ENCODE measurements at regions of chr3 and their contacts with region 1.

Region 1: DNA sequence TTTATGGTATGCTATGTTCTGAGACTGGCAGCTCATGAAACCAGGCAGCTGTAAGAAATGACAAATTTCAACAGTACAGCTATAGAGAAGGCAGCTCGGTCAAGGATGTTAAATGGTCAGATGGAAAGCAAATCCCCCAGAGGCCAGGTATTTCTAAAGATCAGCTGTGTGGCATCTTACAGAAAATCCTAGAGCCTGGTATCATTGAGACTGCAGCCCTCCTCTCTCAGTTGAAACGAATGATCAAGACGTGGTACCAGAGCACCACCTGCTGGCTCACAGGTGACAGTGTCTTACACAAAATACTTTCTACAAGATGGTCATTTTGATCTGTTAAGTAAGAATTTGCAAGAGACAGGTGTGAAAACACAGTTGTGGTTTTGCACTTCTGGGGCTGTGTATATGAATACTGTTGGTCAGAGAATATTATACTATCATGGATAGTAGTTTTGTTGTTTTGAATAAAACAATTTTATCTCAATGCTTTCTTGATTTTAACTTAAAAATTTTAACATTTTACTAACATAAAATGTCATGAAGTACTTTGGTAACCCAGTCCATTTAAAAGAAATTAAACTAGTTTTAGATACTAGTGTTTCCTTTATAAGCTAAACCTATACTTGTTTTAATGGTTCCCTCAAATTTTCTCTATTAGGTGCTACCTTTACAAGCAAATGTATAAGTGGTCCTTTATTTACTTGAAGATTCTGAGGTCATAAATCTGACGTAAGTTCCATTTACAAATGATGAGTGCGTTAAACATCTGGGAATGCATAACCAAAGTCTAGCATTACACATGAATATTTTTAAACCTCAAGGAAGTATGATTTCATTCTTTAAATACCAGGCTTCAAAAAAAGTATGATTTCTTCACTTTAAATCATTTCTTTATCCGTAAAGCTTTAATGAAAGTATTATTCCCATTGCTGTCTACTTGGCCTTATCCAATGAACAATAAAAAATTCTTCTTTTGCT is 121.8 kb downstream of the PDZRN3 start:
- DNase-seq: peak; percentile 65
- ATAC-seq: peak; percentile 74
- H3K4me3 ChIP-seq: no peak overlapping the region
- H3K27ac ChIP-seq: no peak overlapping the region
- H3K4me1 ChIP-seq: no peaks in the 10 kb centered on the region
- H3K27me3 ChIP-seq: peaks cover 13% of the 10 kb centered on the region
- CTCF ChIP-seq: peak; percentile 91

Region 2: DNA sequence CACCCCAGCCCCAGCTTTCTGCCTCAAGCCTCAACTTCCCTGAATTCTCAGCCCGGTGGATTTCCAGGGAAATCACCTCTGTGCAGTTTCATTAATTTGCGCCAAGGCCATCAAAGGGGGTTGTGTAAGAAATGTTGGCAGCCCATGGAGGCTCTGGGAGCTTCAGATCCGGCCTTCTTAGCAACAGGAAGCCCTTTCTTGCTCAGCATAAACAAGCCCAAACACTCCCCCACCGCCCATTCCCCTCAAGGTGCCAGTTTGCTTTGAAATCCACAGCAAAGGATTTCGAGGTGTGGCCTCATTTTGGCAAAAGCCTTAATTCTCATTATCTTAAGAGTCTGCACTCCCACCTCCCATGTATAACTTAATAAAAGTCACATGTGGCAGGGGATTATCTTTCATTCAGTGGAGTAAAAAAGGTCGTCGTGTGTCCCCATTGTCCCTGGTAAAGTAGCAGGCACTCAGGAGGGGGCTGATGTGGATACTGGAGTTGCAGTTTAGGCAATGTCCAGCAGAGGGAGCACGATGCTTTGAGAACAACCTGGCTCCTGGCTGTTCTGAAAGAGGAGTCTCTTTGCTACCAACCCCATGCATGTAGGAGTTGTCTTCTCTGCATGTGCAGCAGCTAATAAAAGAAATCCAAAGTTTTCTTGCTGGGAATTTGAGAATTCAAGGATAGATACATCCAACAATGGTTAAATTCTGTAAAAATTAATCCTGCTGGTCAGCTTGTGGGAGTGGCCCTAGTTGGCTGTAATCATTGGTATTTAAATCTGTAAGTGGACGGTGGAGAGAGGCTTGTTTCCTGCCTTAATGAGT is 401.9 kb before region 1 on chr3:
- CTCF ChIA-PET with region 1: no interaction called
- POLR2A ChIA-PET with region 1: no interaction called
- intact Hi-C with region 1: loop called (anchors 1 kb)
- DNase-seq: peak; percentile 92
- ATAC-seq: peak; percentile 95
- H3K4me3 ChIP-seq: no peak overlapping the region
- H3K27ac ChIP-seq: no peak overlapping the region
- H3K4me1 ChIP-seq: no peaks in the 10 kb centered on the region
- H3K27me3 ChIP-seq: peaks cover 42% of the 10 kb centered on the region
- CTCF ChIP-seq: peak; percentile 96

Region 3: DNA sequence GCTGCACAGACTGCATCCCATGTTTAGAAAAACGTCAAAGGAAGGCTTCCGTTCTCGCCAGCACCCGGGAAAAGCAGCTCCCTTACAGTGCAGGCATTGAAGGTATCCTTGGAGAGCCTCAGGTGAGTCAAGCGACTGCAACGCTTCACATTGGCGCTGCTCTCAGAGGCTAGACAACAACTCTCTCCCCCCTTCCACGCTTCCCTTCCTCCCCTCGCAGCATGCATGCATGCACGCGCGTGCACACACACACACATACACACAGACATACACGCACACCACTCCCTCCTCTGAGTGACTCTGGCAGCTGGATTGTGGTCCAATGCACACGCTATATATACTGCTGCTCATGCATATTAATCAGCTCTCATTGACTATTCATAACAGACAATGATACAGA is 69.2 kb before region 1 on chr3:
- CTCF ChIA-PET with region 1: no interaction called
- POLR2A ChIA-PET with region 1: no interaction called
- intact Hi-C with region 1: no loop called
- DNase-seq: no peak
- ATAC-seq: no peak
- H3K4me3 ChIP-seq: no peak overlapping the region
- H3K27ac ChIP-seq: no peak overlapping the region
- H3K4me1 ChIP-seq: no peaks in the 10 kb centered on the region
- H3K27me3 ChIP-seq: peaks cover 25% of the 10 kb centered on the region
- CTCF ChIP-seq: no peak

Region 4: DNA sequence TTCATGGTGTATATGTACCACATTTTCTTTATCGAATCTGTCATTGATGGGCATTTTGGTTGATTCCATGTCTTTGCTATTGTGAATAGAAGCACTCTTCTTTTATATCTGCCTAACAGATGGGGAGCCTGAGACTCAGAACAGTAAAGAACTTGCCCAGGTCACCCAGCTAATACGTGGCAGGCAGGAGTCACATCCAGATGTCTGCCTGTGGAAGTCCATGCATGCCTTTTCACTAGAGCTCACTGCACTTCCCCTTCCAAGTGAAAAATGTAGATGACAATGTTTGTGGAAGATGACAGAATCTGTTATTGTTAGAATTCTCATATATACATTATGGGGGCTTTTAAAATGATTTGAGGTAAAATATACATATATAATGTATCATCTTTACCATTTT is 43.2 kb before region 1 on chr3:
- CTCF ChIA-PET with region 1: no interaction called
- POLR2A ChIA-PET with region 1: no interaction called
- intact Hi-C with region 1: loop called (anchors 5 kb)
- DNase-seq: no peak
- ATAC-seq: no peak
- H3K4me3 ChIP-seq: no peak overlapping the region
- H3K27ac ChIP-seq: no peak overlapping the region
- H3K4me1 ChIP-seq: no peaks in the 10 kb centered on the region
- H3K27me3 ChIP-seq: 0 out of 2 replicates have a peak, but pooled peaks cover 5% of the 10 kb centered on the region
- CTCF ChIP-seq: no peak

Region 5: DNA sequence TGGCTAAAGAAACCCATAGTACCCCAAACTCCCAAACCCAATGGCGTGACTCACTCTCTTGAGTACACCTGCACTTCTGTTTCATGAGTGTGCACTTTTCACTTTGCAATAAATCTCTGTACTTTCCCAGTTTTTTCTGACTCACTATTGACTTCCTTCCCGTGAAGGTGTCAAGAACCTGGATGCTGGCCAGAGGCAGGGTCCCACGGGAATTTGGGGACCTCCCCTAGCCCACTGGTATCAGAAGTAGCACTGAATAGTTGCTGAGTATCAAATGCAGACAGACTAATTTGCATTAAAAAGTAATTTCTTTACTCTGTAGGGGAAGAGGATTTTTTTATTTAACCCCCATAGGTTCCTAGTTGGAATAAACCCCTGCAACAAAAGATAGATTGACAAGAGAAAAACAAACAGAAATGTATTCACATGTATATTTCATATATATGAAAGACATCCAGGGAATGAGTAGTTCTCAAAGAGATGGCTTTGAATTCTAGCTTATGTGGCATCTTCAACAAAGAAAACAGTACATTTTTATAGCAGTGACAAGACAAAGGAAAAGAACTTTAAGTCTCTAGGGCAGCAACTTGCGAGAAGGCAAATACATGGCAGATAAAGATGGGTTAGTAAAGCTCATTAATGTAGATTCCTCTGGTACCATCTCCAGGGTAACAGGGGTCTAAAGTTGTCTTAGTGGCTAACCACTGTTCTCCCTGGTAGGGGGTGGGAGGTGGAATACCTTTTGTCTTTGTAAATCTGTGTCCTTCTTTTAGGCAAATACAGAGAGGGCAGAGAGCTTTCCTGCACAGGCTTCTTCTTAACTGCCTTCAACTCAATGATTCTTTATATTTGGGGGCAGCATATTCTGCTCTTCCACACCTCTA is 507.3 kb after region 1 on chr3:
- CTCF ChIA-PET with region 1: no interaction called
- POLR2A ChIA-PET with region 1: no interaction called
- intact Hi-C with region 1: no loop called
- DNase-seq: no peak
- ATAC-seq: no peak
- H3K4me3 ChIP-seq: no peak overlapping the region
- H3K27ac ChIP-seq: no peak overlapping the region
- H3K4me1 ChIP-seq: no peaks in the 10 kb centered on the region
- H3K27me3 ChIP-seq: no peaks in the 10 kb centered on the region
- CTCF ChIP-seq: no peak